HCT116 (cell line): ENCODE measurements at regions of chr17 and their contacts with region 1.

Region 1: DNA sequence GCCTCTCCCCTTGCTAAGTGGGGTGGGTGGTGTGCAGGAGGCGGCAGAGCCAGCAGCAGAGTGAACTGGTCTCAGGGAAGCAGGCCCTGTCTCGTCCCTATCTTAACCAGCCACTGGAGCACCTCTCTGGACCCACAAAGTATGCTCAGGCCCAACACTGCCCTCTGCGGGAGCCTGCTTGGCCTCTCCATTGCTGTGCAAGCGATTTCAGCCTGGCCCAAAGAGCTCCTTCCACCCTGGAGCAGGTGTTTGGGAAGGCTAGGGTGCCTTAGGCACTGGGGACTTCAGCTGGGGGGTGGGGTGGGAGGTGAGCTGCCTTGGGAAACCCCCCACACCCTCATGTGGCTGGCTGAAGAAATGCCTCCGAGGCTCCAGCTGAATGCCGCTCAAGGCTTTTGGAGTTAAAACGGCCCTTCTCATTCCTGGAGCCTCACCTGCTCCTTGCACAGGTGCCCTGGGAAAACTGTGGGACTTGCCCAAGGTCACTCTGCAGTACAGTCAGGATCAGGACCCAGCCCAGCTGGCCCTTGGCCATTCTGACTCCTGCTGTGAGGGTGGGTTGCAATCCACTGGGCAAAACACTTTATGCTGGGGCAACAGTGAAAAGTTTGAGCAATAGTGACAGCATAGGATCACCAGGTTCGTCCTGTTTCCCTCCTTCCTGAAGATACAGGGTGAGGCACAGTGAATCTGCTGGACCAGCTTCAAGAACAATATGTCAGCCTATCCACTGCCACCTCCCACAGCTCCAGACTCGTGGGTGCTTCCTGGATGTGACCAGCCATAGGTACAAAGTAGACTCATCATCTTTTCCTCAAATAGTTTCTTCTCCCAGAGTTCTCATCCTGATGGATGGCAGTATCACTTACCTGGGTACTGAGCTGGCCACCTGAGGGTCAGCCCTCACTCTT is 5.9 kb upstream of the UBE2O start:
- DNase-seq: peak; percentile 57
- ATAC-seq: peak; percentile 95
- H3K4me3 ChIP-seq: no peak overlapping the region
- H3K27ac ChIP-seq: no peak overlapping the region
- H3K4me1 ChIP-seq: peaks cover 0 to 10% of the 10 kb centered on the region in 2 experiments; a peak in 1 of 4 replicates
- H3K27me3 ChIP-seq: no peaks in the 10 kb centered on the region
- CTCF ChIP-seq: peak; percentile 72 to 84 (median 83)
- POLR2A ChIP-seq: no peak
- RAD21 ChIP-seq: peak; percentile 86

Region 2: DNA sequence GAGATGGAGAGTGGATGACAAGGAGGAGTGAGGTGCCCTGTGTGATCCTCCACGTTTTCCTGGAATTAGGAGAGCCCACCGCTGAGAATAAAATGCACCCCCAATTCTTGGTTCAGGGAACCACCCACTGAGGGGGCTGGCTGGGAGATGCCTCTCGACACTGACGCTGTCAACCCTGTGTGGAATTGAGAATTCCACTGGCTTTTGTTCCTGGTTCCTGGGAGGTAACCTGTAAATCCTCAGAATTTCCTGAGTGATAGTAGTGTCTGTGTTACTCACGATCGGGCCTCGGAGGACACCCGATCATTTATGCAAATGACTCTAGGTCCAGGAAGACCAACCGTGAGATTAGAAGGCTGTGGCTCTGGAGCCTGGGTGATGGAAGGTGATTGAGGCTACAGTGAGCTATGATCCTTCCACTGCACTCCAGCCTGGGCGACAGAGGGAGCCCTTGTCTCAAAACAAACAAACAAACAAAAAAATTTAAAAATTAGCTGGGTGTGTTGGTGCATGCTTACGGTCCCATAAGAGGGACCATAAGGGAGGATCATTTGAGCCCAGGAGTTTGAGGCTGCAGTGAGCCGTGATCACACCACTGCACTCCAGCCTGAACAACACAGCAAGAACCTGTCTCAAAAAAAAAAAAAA is 93.5 kb before region 1 on chr17:
- CTCF ChIA-PET with region 1: interaction called, 13 read pairs
- POLR2A ChIA-PET with region 1: no interaction called
- RAD21 ChIA-PET with region 1: interaction called in 1 of 2 experiments, 3 read pairs
- intact Hi-C with region 1: no loop called
- DNase-seq: peak; percentile 57
- ATAC-seq: peak; percentile 93
- H3K4me3 ChIP-seq: no peak overlapping the region; a peak in 1 of 4 replicates
- H3K27ac ChIP-seq: no peak overlapping the region
- H3K4me1 ChIP-seq: peaks cover 10 to 16% of the 10 kb centered on the region in 2 experiments; a peak in 3 of 4 replicates
- H3K27me3 ChIP-seq: no peaks in the 10 kb centered on the region
- CTCF ChIP-seq: peak; percentile 80 to 81 (median 80)
- POLR2A ChIP-seq: no peak
- RAD21 ChIP-seq: peak; percentile 73

Region 3: GRCh38 chr17:76408052-76408849 is 50.6 kb before region 1 on chr17:
- CTCF ChIA-PET with region 1: interaction called, 41 read pairs
- POLR2A ChIA-PET with region 1: no interaction called
- RAD21 ChIA-PET with region 1: interaction called, 3 to 9 read pairs
- intact Hi-C with region 1: loop called (anchors 1 kb)
- DNase-seq: peak; percentile 42
- ATAC-seq: peak; percentile 92
- H3K4me3 ChIP-seq: no peak overlapping the region
- H3K27ac ChIP-seq: no peak overlapping the region
- H3K4me1 ChIP-seq: peaks cover 0 to 5% of the 10 kb centered on the region in 2 experiments; a peak in 2 of 4 replicates
- H3K27me3 ChIP-seq: no peaks in the 10 kb centered on the region
- CTCF ChIP-seq: peak; percentile 94 to 100 (median 100)
- POLR2A ChIP-seq: no peak
- RAD21 ChIP-seq: peak; percentile 93

Region 4: DNA sequence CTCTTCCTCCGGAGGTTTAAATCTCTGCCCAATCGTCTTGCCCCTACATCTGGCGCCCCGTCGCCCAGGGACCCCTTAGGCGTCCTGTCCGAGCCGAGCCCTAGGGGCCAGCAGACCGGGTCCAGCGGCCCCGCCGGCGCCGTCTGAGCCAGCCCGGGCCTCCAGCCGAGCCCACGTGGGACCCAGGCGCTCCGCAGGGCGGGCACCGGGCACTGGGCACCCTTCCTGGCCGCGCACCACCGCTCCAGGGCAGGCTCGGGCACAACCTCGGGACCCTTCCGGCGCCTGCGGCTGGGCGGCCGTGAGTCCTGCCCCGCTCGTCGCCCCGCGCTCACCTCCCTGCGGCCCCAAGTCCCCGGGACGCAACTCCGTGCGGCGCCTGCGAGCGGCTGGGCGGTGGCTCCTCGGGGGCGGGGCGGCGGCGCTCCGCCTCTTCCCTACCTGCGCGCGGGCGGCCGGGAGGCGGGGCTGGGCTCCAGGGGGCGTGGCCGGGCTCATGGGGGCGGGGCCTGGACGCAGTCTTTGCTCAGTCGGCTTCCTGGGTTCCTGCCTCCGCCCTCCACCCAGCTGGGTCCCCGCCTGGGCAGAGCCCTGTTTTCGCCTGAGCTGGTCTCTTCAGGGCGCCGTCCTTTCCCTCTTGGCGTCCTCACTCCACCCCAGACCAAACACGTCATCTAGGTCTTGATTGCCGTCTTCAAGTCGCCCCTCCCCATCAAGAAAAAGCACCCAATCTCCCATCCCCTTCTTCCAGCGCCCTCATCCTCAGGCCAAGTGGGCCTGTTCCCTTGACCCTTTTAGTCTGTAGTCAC is 42.4 kb after region 1 on chr17 and contains the start of gene RHBDF2:
- CTCF ChIA-PET with region 1: interaction called, 100 read pairs
- POLR2A ChIA-PET with region 1: interaction called, 7 read pairs
- RAD21 ChIA-PET with region 1: interaction called, 5 to 6 read pairs
- intact Hi-C with region 1: loop called (anchors 1 kb)
- DNase-seq: peak; percentile 54
- ATAC-seq: peak; percentile 87
- H3K4me3 ChIP-seq: peak within 1 kb of the TSS; percentile 92 to 100
- H3K27ac ChIP-seq: peak within 1 kb of the TSS; percentile 96
- H3K4me1 ChIP-seq: peaks cover 32 to 43% of the 10 kb centered on the region in 2 experiments
- H3K27me3 ChIP-seq: no peaks in the 10 kb centered on the region
- CTCF ChIP-seq: no peak
- POLR2A ChIP-seq: peak; percentile 85
- RAD21 ChIP-seq: no peak
- total RNA-seq, gene RHBDF2: 61.1 TPM

Region 5: DNA sequence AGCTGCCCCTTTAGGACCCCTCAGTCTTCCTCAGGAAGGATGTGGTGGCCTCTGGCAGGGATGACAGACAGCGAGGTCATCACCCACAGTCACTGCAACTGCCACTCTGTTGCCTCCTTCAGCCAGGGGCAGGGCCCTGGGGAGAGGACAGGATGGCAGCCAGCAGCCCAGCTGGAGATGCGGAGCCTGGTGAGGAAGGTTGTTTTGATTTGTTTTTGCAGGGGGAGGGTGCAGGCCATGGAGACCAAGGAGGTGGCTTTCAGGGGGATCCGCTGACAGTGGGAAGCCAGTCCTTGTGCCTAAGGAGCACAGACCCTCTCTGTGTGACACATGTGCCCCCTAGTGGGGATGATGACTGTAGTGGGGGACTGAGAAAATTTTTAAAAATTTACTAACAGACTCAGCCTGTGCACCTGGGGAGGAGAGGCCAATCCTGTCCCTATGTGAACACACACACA is 88.4 kb after region 1 on chr17:
- CTCF ChIA-PET with region 1: no interaction called
- POLR2A ChIA-PET with region 1: no interaction called
- RAD21 ChIA-PET with region 1: no interaction called
- intact Hi-C with region 1: loop called (anchors 2 kb)
- DNase-seq: no peak
- ATAC-seq: peak; percentile 96
- H3K4me3 ChIP-seq: no peak overlapping the region
- H3K27ac ChIP-seq: no peak overlapping the region
- H3K4me1 ChIP-seq: peaks cover 0 to 13% of the 10 kb centered on the region in 2 experiments; a peak in 2 of 4 replicates
- H3K27me3 ChIP-seq: no peaks in the 10 kb centered on the region
- CTCF ChIP-seq: peak; percentile 80 to 92 (median 90)
- POLR2A ChIP-seq: no peak
- RAD21 ChIP-seq: peak; percentile 92

Region 6: DNA sequence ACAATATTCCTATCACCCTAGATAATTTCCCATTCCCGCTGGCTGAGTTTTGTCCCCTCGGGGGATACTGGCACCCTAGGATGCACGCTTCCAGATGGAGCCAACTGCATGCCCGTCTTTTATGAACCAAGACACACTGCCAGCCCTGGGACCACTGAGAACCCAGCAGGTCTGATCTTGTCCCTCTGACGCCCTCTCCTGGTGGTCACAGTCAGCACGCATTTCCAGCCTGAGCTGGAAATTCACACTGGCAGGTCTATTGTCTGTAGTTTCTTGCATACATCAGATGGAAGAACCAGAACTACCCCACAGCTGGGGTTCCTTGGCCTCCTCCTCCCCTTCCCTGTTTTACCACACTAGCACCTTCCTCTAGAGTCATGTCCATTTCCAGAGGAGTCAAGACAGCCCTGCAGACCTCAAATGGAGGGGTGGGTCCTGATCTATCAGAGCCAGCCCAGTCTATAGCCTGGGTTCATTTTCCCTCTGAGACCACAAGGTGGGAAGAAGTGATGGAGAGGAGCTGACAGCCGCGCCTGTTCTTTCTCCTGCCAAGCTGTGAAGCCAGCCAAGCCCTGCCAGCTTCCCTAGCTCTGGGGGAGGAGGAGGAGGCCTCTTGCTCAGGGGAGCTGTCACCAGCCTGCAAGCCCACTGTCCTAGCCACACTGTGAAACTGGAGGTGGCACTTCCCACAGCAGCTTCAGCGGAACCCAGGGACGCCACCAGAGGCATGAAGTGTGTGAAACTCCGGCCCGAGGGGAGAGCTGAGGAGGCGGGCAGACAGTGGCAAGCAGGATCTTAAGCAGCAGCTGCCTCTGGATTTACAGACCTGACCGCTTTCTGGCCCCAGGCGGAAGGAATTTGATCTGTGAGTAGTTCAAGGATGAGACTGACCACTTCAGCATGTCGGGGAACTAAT is 222.6 kb after region 1 on chr17:
- CTCF ChIA-PET with region 1: interaction called, 12 read pairs
- POLR2A ChIA-PET with region 1: no interaction called
- RAD21 ChIA-PET with region 1: no interaction called
- intact Hi-C with region 1: no loop called
- DNase-seq: peak; percentile 56
- ATAC-seq: peak; percentile 89
- H3K4me3 ChIP-seq: no peak overlapping the region
- H3K27ac ChIP-seq: no peak overlapping the region
- H3K4me1 ChIP-seq: no peaks in the 10 kb centered on the region
- H3K27me3 ChIP-seq: no peaks in the 10 kb centered on the region
- CTCF ChIP-seq: peak; percentile 90 to 99 (median 96)
- POLR2A ChIP-seq: no peak
- RAD21 ChIP-seq: peak; percentile 91